ENCODE measurements at regions of chr20 and their contacts with region 1.

Region 1: DNA sequence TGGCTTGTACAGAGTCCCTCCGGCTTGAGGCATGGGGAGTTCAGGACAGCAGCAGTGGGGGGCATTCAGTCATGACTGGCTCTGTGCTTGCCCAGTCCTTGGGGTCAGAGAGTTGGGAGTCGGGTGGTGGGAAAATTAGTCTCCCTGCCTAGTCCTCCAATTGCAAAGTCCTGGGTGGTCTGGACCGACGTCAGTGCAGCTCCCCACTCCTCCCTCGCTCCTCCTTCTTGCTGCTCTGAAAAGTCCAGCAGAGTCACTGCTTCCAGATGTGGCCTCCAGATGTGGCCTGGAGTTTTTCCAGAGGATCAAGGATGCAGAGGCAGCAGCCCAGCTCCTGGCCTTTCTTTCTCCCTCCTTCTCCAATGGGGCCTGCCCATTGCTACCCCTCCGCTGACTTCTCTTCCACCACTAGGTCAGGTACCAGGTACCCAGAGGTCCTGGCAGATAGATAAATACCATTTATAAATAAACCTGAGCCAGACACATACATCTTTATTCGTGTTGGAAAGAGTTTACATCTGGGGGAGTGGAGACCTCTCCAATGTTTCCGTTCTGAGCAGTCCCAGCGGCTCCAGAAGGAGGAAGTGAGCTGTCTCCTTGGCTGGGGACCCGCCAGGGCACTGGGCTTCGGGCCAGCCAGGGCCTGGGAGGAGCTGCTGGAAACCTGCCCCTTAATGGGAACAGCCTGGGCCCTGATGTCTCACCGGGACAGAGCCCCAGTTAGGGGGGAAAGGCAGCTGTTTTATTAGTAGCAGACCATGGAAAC is 49.0 kb upstream of the RNF24 start:
- DNase-seq: peak; percentile 95
- ATAC-seq: peak; percentile 89

Region 2: DNA sequence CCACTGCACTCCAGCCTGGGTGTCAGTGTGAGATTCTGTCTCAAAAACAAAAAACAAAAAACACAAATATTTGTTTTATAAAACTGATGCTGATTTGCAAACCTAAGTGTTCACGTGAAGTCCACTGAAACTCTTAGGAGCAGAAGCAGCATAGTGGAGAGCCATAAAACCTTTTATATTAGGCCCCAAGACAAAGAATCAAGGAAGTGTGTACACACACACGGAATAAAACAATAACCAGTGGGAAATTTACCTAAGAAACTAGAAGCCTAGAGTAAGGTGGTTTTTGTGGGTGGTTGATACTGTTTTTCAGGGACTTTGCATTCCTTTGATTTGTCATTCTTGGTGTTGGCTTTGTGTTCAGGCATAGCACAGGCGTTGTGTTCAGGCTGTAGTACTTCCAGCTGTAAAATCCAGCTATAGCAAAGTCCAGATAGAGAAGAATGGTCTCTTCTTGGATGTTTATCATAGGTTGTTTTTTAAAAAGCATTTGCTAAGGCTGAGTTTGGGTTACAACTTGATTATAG is 532.2 kb before region 1 on chr20:
- intact Hi-C with region 1: no loop called
- DNase-seq: no peak
- ATAC-seq: no peak

Region 3: GRCh38 chr20:3889489-3890397 is 174.6 kb before region 1 on chr20:
- intact Hi-C with region 1: loop called (anchors 10 kb)
- DNase-seq: peak; percentile 61
- ATAC-seq: peak; percentile 17

Measured in left ventricle myocardium superior (tissue), 1 donor.